Activated CD4-positive, alpha-beta T cell treated with anti-CD3 and anti-CD28 coated beads for 36 hours (primary cell): ENCODE measurements at regions of chr1 and their contacts with region 1.

Region 1: GRCh38 chr1:175481126-175482066 is 262.0 kb downstream of the TNR start:
- DNase-seq: no peak
- ATAC-seq: no peak
- H3K4me3 Mint-ChIP-seq: no peak overlapping the region
- H3K27ac Mint-ChIP-seq: no peak overlapping the region
- H3K4me1 Mint-ChIP-seq: no peaks in the 10 kb centered on the region
- H3K27me3 Mint-ChIP-seq: peaks cover 21% of the 10 kb centered on the region

Region 2: GRCh38 chr1:175757381-175758015 is 276.1 kb after region 1 on chr1:
- CTCF ChIA-PET with region 1: no interaction called
- POLR2A ChIA-PET with region 1: no interaction called
- intact Hi-C with region 1: loop called in 1 of 2 experiments (anchors 1 kb)
- DNase-seq: peak; percentile 61
- ATAC-seq: peak; percentile 82
- H3K4me3 Mint-ChIP-seq: no peak overlapping the region
- H3K27ac Mint-ChIP-seq: no peak overlapping the region
- H3K4me1 Mint-ChIP-seq: no peaks in the 10 kb centered on the region
- H3K27me3 Mint-ChIP-seq: peaks cover 9% of the 10 kb centered on the region

Region 3: DNA sequence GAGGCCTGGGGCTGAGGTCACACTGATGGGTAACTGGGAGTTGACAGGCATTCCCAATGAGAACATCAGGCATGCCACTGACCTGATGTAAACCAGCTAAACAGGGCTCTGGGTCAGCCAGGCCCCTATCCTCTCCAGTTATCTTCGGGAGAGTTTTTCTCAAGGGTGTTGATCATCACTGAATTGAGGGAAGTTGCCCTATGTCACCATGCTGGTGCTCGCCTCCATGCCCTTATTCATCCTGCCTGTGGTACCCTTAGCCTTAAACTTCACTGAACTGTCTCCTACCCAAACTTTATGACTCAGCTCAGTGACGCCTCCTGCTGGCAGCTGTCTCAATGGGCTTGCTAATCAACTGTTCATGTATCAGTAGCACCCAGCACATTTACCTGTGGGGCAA is 342.7 kb after region 1 on chr1:
- CTCF ChIA-PET with region 1: no interaction called
- POLR2A ChIA-PET with region 1: no interaction called
- intact Hi-C with region 1: loop called in 1 of 2 experiments (anchors 5 kb)
- DNase-seq: peak; percentile 59
- ATAC-seq: no peak
- H3K4me3 Mint-ChIP-seq: no peak overlapping the region
- H3K27ac Mint-ChIP-seq: no peak overlapping the region
- H3K4me1 Mint-ChIP-seq: no peaks in the 10 kb centered on the region
- H3K27me3 Mint-ChIP-seq: peaks cover 21% of the 10 kb centered on the region

Region 4: GRCh38 chr1:175873290-175873935 is 392.0 kb after region 1 on chr1:
- CTCF ChIA-PET with region 1: no interaction called
- POLR2A ChIA-PET with region 1: no interaction called
- intact Hi-C with region 1: loop called in 1 of 2 experiments (anchors 10 kb)
- DNase-seq: no peak
- ATAC-seq: no peak
- H3K4me3 Mint-ChIP-seq: no peak overlapping the region
- H3K27ac Mint-ChIP-seq: no peak overlapping the region
- H3K4me1 Mint-ChIP-seq: no peaks in the 10 kb centered on the region
- H3K27me3 Mint-ChIP-seq: no peaks in the 10 kb centered on the region

Region 5: GRCh38 chr1:175885326-175885725 is 403.9 kb after region 1 on chr1:
- CTCF ChIA-PET with region 1: no interaction called
- POLR2A ChIA-PET with region 1: no interaction called
- intact Hi-C with region 1: no loop called
- DNase-seq: no peak
- ATAC-seq: no peak
- H3K4me3 Mint-ChIP-seq: no peak overlapping the region
- H3K27ac Mint-ChIP-seq: no peak overlapping the region
- H3K4me1 Mint-ChIP-seq: no peaks in the 10 kb centered on the region
- H3K27me3 Mint-ChIP-seq: peaks cover 4% of the 10 kb centered on the region

Region 6: GRCh38 chr1:176073524-176074157 is 592.2 kb after region 1 on chr1:
- CTCF ChIA-PET with region 1: no interaction called
- POLR2A ChIA-PET with region 1: no interaction called
- intact Hi-C with region 1: loop called in 1 of 2 experiments (anchors 2 kb)
- DNase-seq: peak; percentile 39
- ATAC-seq: peak; percentile 61
- H3K4me3 Mint-ChIP-seq: no peak overlapping the region
- H3K27ac Mint-ChIP-seq: no peak overlapping the region
- H3K4me1 Mint-ChIP-seq: peaks cover 3% of the 10 kb centered on the region
- H3K27me3 Mint-ChIP-seq: no peaks in the 10 kb centered on the region